ENCODE measurements at regions of chr6 and their contacts with region 1.

Region 1: DNA sequence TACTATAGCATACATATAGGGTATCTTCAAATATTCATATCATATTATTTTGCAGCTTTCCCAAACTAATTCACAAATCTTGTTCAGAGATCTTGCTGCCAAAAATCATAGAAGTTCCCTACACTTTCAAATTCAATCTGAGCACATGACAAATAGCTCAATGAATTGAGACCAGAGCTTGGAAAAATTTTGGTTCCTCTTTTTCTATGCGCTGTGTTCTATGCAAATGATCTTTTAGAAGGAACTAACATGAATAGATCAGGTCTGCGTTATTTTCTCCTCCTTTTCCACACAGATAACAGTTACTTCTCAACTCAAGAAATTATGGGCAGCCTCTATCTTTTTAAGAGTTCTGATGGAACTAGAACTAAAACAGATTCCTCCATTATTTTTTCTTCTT is 316.3 kb downstream of the ARHGAP18 start:
- DNase-seq: no peak
- ATAC-seq: no peak
- H3K4me3 ChIP-seq: no peak overlapping the region
- H3K4me3 Mint-ChIP-seq: no peak overlapping the region
- H3K27ac ChIP-seq: no peak overlapping the region
- H3K27ac Mint-ChIP-seq: no peak overlapping the region
- H3K4me1 ChIP-seq: no peaks in the 10 kb centered on the region
- H3K4me1 Mint-ChIP-seq: no peaks in the 10 kb centered on the region
- H3K27me3 ChIP-seq: peaks cover 0 to 2% of the 10 kb centered on the region in 2 experiments
- H3K27me3 Mint-ChIP-seq: peaks cover 0 to 10% of the 10 kb centered on the region in 2 donors

Region 2: DNA sequence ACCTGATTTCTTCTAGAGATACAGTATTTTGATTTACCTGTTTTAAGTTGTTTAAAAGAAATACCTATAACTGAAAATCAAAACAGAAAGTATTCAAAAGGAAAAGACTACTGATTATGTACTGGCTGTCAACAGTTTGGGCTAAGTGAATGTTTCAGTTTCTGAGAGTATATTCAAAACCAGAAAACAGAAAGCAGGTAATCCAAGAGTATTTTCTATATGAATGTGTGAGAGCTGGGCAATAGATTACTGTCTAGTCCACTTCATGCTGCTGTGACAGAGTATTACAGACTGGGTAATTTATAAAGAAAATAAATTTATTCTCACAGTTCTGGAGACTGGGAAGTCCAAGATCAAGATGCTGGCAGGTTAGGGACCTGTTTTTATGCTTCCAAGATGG is 55.3 kb after region 1 on chr6:
- CTCF ChIA-PET with region 1: no interaction called
- POLR2A ChIA-PET with region 1: no interaction called
- DNase-seq: no peak
- ATAC-seq: no peak
- H3K4me3 ChIP-seq: no peak overlapping the region
- H3K4me3 Mint-ChIP-seq: no peak overlapping the region
- H3K27ac ChIP-seq: no peak overlapping the region
- H3K27ac Mint-ChIP-seq: peak overlapping the region in 1 of 2 donors; percentile 23
- H3K4me1 ChIP-seq: peaks cover 0 to 8% of the 10 kb centered on the region in 2 experiments
- H3K4me1 Mint-ChIP-seq: peaks cover 32 to 46% (median 36%) of the 10 kb centered on the region in 3 donors
- H3K27me3 ChIP-seq: no peaks in the 10 kb centered on the region
- H3K27me3 Mint-ChIP-seq: no peaks in the 10 kb centered on the region

Region 3: DNA sequence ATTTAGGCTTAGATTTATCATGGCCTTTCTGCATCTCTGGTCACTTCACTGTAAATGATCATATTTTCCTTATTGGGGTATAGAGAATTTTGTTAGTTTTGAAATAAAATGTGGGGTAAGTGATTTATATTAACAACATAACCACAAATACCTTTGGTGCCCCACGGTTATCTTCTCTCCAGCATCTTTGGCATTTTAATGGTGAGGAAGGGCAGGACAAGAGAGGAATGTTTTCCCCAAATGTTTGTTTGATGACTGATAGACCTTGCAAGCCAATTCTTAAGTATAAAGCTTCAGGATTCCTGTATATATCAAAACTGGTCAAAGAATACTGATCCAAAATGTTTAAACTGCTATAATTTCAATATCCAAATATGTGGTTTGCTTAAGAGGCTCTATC is 1261.9 kb after region 1 on chr6:
- CTCF ChIA-PET with region 1: no interaction called
- POLR2A ChIA-PET with region 1: interaction called in 1 of 2 experiments, 15 read pairs
- DNase-seq: no peak
- ATAC-seq: no peak
- H3K4me3 ChIP-seq: no peak overlapping the region
- H3K4me3 Mint-ChIP-seq: no peak overlapping the region
- H3K27ac ChIP-seq: no peak overlapping the region
- H3K27ac Mint-ChIP-seq: no peak overlapping the region
- H3K4me1 ChIP-seq: no peaks in the 10 kb centered on the region
- H3K4me1 Mint-ChIP-seq: no peaks in the 10 kb centered on the region
- H3K27me3 ChIP-seq: no peaks in the 10 kb centered on the region
- H3K27me3 Mint-ChIP-seq: peaks cover 0 to 3% of the 10 kb centered on the region in 2 donors